Dendritic cell treated with granulocyte-macrophage colony-stimulating factor and Interleukin-4, amounts not matched to agents 40 ng/mL and 50 ng/mL, for 4 days (primary cell): ENCODE measurements at regions of chr5 and their contacts with region 1.

Region 1: GRCh38 chr5:115841382-115842088 is at the starts of genes AP3S1 and ATG12:
- H3K4me3 Mint-ChIP-seq: peak within 1 kb of the TSS; percentile 93
- H3K27ac Mint-ChIP-seq: peak within 1 kb of the TSS; percentile 99
- H3K4me1 Mint-ChIP-seq: peaks cover 39% of the 10 kb centered on the region
- H3K27me3 Mint-ChIP-seq: no peaks in the 10 kb centered on the region

Region 2: DNA sequence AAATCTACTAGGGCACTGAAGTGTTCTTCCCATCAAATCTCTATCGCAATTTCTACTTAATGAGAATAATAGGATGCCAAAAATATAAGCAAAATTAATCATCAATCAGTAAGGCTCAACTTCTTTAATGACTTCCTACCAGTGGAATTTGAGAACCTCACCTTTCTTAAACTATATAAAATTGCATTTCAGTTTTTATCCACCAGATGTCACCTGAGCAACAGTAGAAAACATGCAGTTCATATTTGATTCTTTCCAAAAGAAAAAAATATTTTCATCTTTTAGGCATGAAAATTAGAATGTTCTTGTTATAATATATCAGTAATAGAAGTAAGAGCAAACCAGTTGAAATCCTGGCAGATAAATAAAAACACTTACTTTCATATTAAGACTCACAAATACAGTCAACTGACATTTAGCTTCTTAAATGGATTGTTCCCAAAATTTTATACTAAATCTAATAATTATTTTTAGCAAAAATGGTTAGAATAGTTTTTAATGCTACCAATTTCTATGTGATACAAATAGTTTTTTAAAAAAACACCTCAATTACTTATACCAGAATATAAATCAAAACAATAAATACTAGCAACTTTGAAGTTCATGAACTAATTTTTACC is 531.7 kb before region 1 on chr5:
- intact Hi-C with region 1: loop called (anchors 5 kb)
- H3K4me3 Mint-ChIP-seq: no peak overlapping the region
- H3K27ac Mint-ChIP-seq: no peak overlapping the region
- H3K4me1 Mint-ChIP-seq: no peaks in the 10 kb centered on the region
- H3K27me3 Mint-ChIP-seq: peaks cover 17% of the 10 kb centered on the region

Region 3: GRCh38 chr5:115625579-115626444 is 215.7 kb before region 1 on chr5 and contains the start of gene TMED7:
- intact Hi-C with region 1: loop called (anchors 1 kb)
- H3K4me3 Mint-ChIP-seq: no peak within 1 kb of the TSS
- H3K27ac Mint-ChIP-seq: no peak within 1 kb of the TSS
- H3K4me1 Mint-ChIP-seq: peaks cover 19% of the 10 kb centered on the region
- H3K27me3 Mint-ChIP-seq: no peaks in the 10 kb centered on the region

Region 4: DNA sequence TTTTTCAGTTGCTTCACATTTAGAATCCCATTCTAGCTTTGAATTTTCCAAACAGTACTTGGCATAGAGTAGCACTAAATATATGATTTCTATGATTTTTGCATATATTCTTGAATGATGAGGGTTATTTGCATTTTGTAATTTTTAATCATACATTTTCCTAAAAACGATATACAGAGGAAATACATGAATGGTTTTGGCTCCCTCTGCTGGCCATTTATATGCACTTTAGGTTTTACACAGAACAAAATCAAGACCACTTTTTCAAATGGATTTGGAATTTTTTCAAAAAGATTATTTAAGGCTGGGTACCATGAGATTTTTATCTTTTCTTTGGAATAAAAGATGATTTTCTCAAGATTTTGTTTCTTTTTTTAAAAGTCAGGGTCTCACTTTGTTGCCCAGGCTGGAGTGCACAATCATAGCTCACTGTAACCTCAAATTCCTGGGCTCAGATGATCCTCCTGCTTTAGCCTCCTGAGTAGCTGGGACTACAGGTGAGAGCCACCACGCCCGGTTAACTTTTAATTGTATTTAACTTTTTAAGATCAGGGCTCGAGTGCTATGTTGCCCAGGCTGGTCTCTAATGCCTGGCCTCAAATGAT is 226.6 kb after region 1 on chr5:
- intact Hi-C with region 1: loop called (anchors 5 kb)
- H3K4me3 Mint-ChIP-seq: no peak overlapping the region
- H3K27ac Mint-ChIP-seq: no peak overlapping the region
- H3K4me1 Mint-ChIP-seq: no peaks in the 10 kb centered on the region
- H3K27me3 Mint-ChIP-seq: no peaks in the 10 kb centered on the region

Region 5: GRCh38 chr5:116178925-116179324 is 337.4 kb after region 1 on chr5:
- intact Hi-C with region 1: no loop called
- H3K4me3 Mint-ChIP-seq: no peak overlapping the region
- H3K27ac Mint-ChIP-seq: no peak overlapping the region
- H3K4me1 Mint-ChIP-seq: peaks cover 7% of the 10 kb centered on the region
- H3K27me3 Mint-ChIP-seq: no peaks in the 10 kb centered on the region